Heart right ventricle (tissue), 16 donors: ENCODE measurements at regions of chr4 and their contacts with region 1.

Region 1: DNA sequence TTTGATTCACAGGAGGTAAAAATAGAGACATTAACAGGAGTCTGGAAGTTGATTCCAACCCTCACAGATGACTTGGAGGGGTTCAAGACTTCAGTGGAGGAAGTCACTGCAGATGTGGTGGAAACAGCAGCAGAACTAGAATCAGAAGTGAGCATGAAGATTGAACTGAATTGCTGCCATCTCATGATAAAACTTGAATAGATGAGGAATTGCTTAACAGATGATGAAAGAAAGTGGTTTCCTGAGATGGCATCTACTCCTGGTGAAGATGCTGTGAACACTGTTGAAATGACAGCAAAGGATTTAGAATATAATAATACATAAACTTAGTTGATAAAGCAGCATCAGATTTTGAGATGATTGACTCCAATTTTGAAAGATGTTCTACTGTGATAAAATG is 76.5 kb downstream of the RELL1 start:
- DNase-seq: no peak
- ATAC-seq: no peak
- H3K4me3 ChIP-seq: no peak overlapping the region
- H3K27ac ChIP-seq: no peak overlapping the region
- H3K4me1 ChIP-seq: peaks cover 0 to 3% (median 0%) of the 10 kb centered on the region in 9 donors
- H3K27me3 ChIP-seq: no peaks in the 10 kb centered on the region
- CTCF ChIP-seq: no peak

Region 2: DNA sequence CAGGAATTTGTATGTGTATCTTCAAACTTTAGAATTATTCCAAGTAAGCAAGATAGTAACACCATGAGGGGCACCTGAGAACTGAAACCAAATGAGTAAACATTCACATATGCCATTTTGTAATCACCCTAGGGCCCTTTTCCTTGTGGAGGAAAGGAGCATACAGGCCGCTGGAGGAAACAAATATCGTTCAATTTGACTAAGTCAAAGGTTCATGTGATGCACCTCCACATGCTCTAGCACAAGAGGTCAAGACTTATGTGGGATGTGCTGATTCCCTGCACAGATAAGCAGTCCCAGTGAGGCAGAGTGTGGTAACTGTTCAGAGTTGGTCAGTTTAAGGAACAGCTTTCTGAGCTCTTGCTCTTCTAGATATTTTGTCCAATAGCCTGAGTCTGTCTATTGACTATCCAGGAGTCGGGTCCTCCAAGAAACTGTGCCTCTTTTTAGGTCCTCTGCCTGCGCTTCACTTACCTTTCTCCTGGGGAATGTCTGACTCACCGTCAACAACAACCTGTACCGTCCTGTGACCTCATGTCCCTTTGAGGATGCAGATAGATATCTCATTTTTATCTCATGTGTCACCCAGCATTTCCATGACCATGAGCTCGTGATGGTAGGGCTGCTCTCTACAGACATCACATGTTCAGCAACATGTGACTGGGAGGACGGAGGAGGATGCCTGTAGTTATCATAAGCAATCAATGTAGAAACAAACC is 168.2 kb before region 1 on chr4:
- intact Hi-C with region 1: no loop called
- DNase-seq: no peak
- ATAC-seq: no peak
- H3K4me3 ChIP-seq: no peak overlapping the region
- H3K27ac ChIP-seq: no peak overlapping the region
- H3K4me1 ChIP-seq: no peaks in the 10 kb centered on the region
- H3K27me3 ChIP-seq: peaks cover 0 to 28% (median 21%) of the 10 kb centered on the region in 7 donors
- CTCF ChIP-seq: no peak

Region 3: DNA sequence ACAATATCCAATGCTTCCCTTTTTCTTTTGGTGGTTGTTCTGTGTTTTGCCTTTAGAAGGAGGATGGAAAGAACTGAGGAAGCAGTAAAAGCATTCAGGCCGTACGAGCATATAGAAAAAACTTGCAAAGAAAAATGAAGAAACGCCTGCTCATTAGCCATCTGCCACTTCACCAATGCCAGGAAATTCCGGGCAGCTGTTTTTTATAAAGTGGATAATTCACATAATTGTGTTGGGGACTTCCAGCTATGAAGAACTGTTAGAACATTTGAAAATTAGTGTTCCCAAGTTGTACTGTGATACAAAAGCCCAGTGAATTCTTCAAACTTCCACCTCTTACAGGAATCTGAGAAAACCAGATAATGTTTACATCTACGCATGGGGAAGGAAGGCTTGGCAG is 64.8 kb after region 1 on chr4:
- intact Hi-C with region 1: loop called in 1 of 10 experiments (anchors 5 kb)
- DNase-seq: no peak
- ATAC-seq: no peak
- H3K4me3 ChIP-seq: no peak overlapping the region
- H3K27ac ChIP-seq: peak overlapping the region in 2 of 10 donors; percentile 21 to 61
- H3K4me1 ChIP-seq: peaks cover 6 to 90% (median 52%) of the 10 kb centered on the region in 9 donors
- H3K27me3 ChIP-seq: no peaks in the 10 kb centered on the region
- CTCF ChIP-seq: no peak

Region 4: GRCh38 chr4:37699868-37700481 is 90.3 kb after region 1 on chr4:
- intact Hi-C with region 1: loop called in 1 of 10 experiments (anchors 5 kb)
- DNase-seq: no peak
- ATAC-seq: no peak
- H3K4me3 ChIP-seq: no peak overlapping the region
- H3K27ac ChIP-seq: no peak overlapping the region
- H3K4me1 ChIP-seq: no peaks in the 10 kb centered on the region
- H3K27me3 ChIP-seq: no peaks in the 10 kb centered on the region
- CTCF ChIP-seq: no peak

Region 5: GRCh38 chr4:37780444-37781150 is 171.0 kb after region 1 on chr4:
- intact Hi-C with region 1: loop called in 1 of 10 experiments (anchors 5 kb)
- DNase-seq: peak in 1 of 2 donors; percentile 31
- ATAC-seq: peak in 3 of 8 donors; percentile 44 to 69 (median 67)
- H3K4me3 ChIP-seq: no peak overlapping the region
- H3K27ac ChIP-seq: peak overlapping the region in 1 of 10 donors; percentile 19
- H3K4me1 ChIP-seq: peaks cover 0 to 8% (median 0%) of the 10 kb centered on the region in 9 donors
- H3K27me3 ChIP-seq: no peaks in the 10 kb centered on the region
- CTCF ChIP-seq: peak in 6 of 9 donors; percentile 21 to 40 (median 38)